ENCODE measurements at regions of chr21 and their contacts with region 1.

Region 1: GRCh38 chr21:30329203-30329875 is 8.2 kb downstream of the KRTAP27-1 start:
- DNase-seq: no peak

Region 2: GRCh38 chr21:30306884-30307283 is 22.5 kb before region 1 on chr21:
- intact Hi-C with region 1: loop called in 1 of 2 experiments (anchors 1 kb)
- DNase-seq: no peak

Region 3: GRCh38 chr21:31132574-31133242 is 803.4 kb after region 1 on chr21:
- intact Hi-C with region 1: no loop called
- DNase-seq: no peak